Astrocyte of the cerebellum (primary cell): ENCODE measurements at regions of chr7 and their contacts with region 1.

Region 1: DNA sequence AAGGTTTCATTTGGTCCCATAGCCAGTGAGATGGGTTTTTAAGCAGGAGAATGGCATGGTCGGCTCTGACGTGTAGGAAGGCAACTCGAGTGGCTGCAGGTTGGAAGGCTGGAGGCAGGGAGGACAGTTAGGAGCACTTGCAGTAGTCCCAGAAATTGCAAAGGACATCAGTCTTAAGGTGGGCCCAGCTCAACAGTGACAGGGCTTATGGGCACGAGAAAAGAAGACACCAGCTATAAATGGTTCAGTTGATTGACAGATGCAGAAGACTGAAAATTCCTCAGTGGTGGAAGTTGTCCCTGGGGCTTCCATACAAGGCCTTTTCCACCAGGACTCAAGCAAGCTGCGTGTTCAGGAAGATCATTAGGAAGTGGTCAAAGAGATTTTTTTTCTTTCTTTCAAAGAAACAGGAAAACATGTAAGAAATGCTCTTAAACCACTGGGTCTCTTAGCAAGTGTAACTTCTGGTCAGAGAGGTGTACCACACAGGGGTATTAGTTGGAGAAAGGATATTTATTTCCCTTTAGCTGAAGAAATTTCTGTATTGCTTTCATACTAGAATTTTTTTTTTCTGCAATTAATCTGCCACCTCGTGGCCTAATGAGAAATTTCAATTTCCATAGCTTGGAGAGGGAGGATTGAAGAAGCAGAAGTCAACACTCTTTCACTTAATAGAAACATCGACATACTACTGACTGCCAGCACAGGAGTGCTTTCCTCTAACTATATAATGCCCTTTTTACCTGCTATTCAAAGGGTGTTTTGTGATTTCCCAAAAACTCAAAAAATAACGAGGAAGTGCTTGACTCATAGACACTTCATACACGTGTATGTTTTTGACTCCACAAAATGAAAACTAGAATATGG is 177.4 kb upstream of the NAMPT start:
- DNase-seq: peak; percentile 31
- H3K4me3 ChIP-seq: no peak overlapping the region
- CTCF ChIP-seq: peak; percentile 32

Region 2: GRCh38 chr7:106170211-106170610 is 292.0 kb before region 1 on chr7:
- in situ Hi-C with region 1: loop called (anchors 5 kb)
- DNase-seq: no peak
- H3K4me3 ChIP-seq: no peak overlapping the region
- CTCF ChIP-seq: no peak